Transverse colon (tissue), 4 donors: ENCODE measurements at regions of chr11 and their contacts with region 1.

Region 1: GRCh38 chr11:117932067-117932370 is 2.8 kb upstream of the TMPRSS13 start:
- DNase-seq: peak; percentile 13
- H3K4me3 ChIP-seq: no peak overlapping the region
- H3K27ac ChIP-seq: no peak overlapping the region
- H3K4me1 ChIP-seq: peaks cover 0 to 17% (median 9%) of the 10 kb centered on the region in 4 donors
- H3K27me3 ChIP-seq: no peaks in the 10 kb centered on the region
- CTCF ChIP-seq: no peak
- EP300 ChIP-seq: no peak
- POLR2A ChIP-seq: no peak

Region 2: DNA sequence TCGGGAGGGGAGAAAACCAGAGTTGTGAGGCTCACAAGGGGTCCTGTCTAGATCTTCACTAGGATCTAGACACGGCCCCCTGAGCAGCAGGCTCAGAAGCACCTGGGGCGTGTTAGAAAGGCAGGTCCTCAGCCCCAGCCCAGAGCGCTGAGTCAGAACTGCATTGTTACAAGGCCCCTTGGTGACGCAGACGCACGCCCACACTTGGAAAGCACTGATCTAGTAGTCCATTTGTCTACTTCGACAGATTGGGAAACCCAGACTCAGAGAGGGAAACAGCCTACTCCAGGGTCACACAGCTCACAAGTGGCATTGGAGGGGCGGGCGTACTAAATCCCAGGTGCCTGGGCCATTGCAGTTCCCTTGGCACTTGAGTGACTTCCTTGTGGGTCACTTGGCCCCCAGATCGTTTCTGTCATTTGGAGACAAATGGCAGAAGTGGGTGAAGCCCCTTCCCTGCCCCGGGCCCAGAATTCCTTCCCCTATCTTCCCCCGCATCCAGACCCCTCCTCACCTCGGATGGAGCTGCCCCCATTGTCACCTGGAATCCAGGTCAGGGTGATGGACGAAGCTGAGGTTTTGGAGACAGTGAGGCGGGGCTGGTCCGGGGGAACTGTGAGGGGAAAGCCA is 493.5 kb before region 1 on chr11:
- in situ Hi-C with region 1: loop called in 2 of 4 experiments (anchors 25 kb)
- intact Hi-C with region 1: loop called (anchors 10 kb)
- DNase-seq: no peak
- H3K4me3 ChIP-seq: no peak overlapping the region
- H3K27ac ChIP-seq: no peak overlapping the region
- H3K4me1 ChIP-seq: no peaks in the 10 kb centered on the region
- H3K27me3 ChIP-seq: no peaks in the 10 kb centered on the region
- CTCF ChIP-seq: no peak
- EP300 ChIP-seq: no peak
- POLR2A ChIP-seq: no peak

Region 3: GRCh38 chr11:117843666-117844484 is 88.1 kb before region 1 on chr11:
- in situ Hi-C with region 1: no loop called
- intact Hi-C with region 1: no loop called
- DNase-seq: peak; percentile 84
- H3K4me3 ChIP-seq: no peak overlapping the region
- H3K27ac ChIP-seq: no peak overlapping the region
- H3K4me1 ChIP-seq: peaks cover 0 to 12% (median 0%) of the 10 kb centered on the region in 4 donors
- H3K27me3 ChIP-seq: no peaks in the 10 kb centered on the region
- CTCF ChIP-seq: peak; percentile 97 to 100 (median 99)
- EP300 ChIP-seq: no peak
- POLR2A ChIP-seq: no peak

Region 4: DNA sequence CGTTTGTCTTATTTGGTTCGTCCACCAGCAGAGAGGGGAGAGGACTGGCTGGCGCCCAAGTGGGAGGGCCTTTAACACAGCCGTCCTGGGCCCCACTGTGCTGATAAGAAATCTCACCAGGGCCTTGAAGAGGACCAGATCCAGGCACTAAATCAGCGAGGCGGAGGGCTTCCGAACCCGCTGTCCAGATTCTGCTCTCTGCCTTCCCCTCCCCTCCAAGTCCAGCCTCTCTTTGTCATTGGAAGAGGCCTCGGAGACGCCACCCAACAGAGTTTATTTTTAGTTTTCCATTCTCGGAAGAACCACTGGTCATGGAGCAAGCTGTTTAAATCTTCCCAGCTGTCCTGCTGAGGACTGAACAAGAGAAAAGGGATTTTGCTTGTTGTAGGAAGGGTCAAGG is 46.2 kb before region 1 on chr11:
- in situ Hi-C with region 1: no loop called
- intact Hi-C with region 1: no loop called
- DNase-seq: peak; percentile 49
- H3K4me3 ChIP-seq: no peak overlapping the region
- H3K27ac ChIP-seq: peak overlapping the region; percentile 69 to 91 (median 81)
- H3K4me1 ChIP-seq: peaks cover 6 to 32% (median 16%) of the 10 kb centered on the region in 4 donors
- H3K27me3 ChIP-seq: no peaks in the 10 kb centered on the region
- CTCF ChIP-seq: no peak
- EP300 ChIP-seq: no peak
- POLR2A ChIP-seq: no peak

Region 5: DNA sequence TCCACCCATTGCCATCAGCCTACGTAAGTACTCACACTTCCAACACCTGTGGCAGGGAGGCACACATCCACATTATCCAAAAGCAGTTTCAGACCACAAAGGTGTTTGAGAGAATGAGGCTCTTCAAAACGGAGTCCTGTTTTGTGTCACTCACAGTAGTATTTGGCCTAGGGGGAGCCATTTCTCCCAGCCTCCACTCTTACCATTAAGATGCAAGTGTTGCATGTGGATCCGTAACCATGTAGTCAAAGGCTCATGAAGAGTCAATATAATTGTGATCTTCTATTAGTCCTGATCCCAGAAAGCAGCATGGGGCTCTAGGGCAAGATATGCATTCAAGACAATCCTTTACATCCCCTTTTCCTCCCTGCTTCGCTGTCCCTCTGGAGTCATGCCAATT is 95.7 kb after region 1 on chr11:
- in situ Hi-C with region 1: no loop called
- intact Hi-C with region 1: no loop called
- DNase-seq: no peak
- H3K4me3 ChIP-seq: no peak overlapping the region
- H3K27ac ChIP-seq: no peak overlapping the region
- H3K4me1 ChIP-seq: no peaks in the 10 kb centered on the region
- H3K27me3 ChIP-seq: no peaks in the 10 kb centered on the region
- CTCF ChIP-seq: no peak
- EP300 ChIP-seq: no peak
- POLR2A ChIP-seq: no peak